ENCODE measurements at regions of chrX and their contacts with region 1.

Region 1: DNA sequence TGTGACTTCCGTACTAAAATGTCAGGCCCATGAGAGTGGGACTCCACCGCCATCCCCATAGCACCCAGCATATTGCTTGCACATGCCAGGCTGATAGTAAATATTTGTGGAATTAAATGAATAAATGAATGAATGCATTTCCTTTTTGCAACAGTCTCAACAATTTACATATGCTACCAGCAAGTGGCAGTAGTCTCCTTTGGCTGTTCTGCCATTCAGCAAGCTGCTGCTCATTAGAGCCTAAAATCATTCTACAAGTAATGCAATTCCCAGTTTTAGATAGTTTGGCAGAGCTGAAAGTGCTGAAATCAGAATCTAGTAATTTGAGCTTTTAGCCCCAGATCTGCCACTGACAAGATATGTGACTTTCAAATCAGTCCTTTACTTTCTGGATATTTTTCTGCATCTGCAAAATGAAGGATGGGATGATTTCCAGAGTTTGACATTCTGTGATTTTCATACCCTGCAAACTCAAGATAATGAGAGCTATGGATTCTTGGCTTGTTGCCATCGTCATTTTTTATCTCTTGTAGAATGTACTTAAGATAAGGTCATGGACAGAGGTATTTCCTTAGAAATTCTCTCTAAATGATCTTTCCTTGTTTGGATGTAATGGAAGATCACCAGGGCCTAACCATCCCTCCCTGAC is 35.7 kb upstream of the INTS6L start:
- DNase-seq: no peak
- ATAC-seq: no peak

Region 2: DNA sequence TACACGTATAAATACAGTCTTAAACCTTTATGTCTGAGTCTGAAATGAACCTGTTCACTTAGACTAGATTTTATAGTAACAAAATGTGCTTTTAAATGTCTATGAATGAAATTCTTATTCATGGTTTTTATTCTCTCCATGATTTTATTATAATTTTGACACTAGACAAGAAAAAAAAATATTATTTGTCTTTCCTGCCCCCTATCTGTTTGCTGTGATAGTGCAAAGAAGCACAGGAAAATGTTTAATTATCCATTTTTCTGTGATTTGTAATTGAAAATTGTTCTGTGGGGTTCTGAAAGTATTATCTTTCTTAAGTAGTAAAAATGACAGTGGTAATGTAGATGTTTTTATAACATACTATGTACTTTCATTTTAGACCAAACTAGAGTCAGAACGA is 87.7 kb after region 1 on chrX:
- intact Hi-C with region 1: loop called (anchors 5 kb)
- DNase-seq: no peak
- ATAC-seq: no peak

Region 3: DNA sequence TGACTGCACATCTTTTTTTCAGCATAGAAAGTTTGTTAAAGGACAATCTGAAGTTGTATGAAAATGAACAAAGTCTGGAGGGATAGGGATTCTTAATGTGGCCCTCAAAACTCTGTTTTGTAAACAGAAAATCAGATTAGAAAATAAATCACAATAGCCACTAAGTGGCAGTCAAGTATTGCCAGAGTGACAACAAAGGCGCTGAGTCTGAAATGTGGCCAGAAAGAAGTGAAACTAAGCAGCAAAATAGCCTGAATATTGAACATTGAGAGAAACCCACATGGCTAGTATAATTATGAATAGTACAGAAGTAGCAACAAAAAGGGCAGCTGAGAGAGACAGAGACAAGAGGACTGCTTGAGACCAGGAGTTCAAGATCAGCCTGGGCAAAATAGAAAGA is 147.6 kb after region 1 on chrX:
- intact Hi-C with region 1: loop called (anchors 5 kb)
- DNase-seq: no peak
- ATAC-seq: no peak

Measured in Right ventricle myocardium inferior (tissue), 1 donor.